ENCODE measurements at regions of chr10 and their contacts with region 1.

Region 1: DNA sequence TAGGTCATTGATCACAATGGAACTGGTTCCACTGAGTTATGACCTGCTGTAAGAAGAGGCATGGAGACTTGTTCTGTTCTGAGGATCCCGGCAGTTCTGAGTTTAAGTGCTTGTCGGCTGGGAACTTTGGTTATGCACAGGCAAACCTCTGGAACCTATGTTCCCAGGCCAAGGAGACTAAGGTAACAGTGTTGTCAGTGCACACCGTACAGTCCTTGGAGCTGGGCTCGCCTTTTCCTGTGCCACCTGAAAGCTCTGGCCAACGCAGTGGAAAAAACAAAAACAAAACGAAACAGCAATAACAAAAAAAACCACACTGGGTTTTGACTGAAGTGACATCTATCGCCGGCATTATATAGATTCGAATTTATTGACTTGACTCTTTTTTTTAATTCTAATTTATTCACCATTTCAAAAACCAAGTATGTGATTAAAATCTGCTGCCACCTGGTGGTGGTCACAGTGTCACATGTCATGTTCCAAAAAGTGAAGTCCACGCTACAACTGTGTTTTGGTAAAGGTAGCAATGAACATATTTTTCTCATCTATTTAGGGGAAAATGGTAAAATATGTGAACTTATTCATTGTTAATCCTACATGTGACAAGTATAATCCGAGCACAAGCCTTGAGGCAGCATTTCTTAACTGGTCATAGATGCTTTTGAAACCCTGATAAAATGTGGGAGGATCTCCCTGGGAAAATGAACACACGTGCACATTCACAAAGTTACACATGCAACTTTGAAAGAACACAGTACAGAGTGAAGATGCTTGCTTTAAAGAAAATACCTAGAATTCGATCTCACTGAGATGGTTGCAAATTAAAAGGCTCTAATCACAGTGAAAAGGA is 113.8 kb upstream of the PPP2R2D start:
- DNase-seq: peak; percentile 17
- ATAC-seq: no peak
- H3K4me3 ChIP-seq: no peak overlapping the region
- H3K27ac ChIP-seq: no peak overlapping the region
- H3K4me1 ChIP-seq: no peaks in the 10 kb centered on the region
- H3K27me3 ChIP-seq: no peaks in the 10 kb centered on the region
- CTCF ChIP-seq: peak; percentile 43
- POLR2A ChIP-seq: no peak
- RAD21 ChIP-seq: no peak; the same call in 1 of the 2 replicates

Region 2: DNA sequence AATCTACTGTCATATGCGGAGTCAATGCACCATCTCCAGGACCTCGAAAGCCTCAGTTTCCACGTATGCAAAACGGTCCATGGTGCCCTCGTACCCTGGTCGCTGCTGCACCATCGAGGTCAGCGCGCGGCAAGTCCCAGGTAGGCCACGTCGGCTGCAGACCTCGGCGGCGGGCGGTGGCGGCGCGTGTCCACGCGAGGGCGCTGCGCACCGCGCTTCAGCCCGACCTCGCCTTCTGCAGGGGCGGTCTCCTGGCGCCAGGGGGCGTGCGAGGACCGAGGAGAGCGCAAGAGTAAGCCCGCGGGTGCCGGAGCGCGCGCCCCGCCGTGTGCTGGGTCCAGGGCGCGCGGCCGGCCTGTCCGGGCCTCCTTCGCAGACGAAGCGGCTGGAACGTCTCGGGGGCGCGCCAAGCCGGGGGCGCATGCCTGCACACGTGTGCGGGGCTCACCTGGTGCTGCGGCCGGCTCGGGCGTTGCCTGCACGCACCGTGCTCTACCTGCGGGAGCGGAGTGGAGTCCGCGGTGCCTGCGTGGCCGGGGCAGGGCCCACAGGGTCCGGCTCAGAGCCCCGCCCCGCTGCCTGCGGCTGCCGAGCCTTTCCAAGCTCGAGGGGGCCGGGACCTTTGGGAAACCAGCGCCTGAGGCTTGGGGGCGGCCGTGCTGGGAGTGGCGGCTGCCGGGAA is 1596.8 kb before region 1 on chr10:
- CTCF ChIA-PET with region 1: no interaction called
- POLR2A ChIA-PET with region 1: no interaction called
- dilution Hi-C with region 1: no loop called
- in situ Hi-C with region 1: no loop called
- intact Hi-C with region 1: loop called (anchors 1 kb)
- DNase-seq: peak; percentile 75
- ATAC-seq: peak; percentile 96
- H3K4me3 ChIP-seq: peak overlapping the region; percentile 61
- H3K27ac ChIP-seq: no peak overlapping the region; the same call in 1 of the 2 replicates
- H3K4me1 ChIP-seq: 0 out of 2 replicates have a peak, but pooled peaks cover 1% of the 10 kb centered on the region
- H3K27me3 ChIP-seq: no peaks in the 10 kb centered on the region
- CTCF ChIP-seq: peak; percentile 100; the same call in 1 of the 2 replicates
- POLR2A ChIP-seq: no peak
- RAD21 ChIP-seq: peak; percentile 92

Region 3: GRCh38 chr10:130206216-130206737 is 1580.7 kb before region 1 on chr10:
- CTCF ChIA-PET with region 1: no interaction called
- POLR2A ChIA-PET with region 1: no interaction called
- dilution Hi-C with region 1: no loop called
- in situ Hi-C with region 1: no loop called
- intact Hi-C with region 1: loop called (anchors 5 kb)
- DNase-seq: no peak
- ATAC-seq: peak; percentile 25; the same call in 1 of the 2 replicates
- H3K4me3 ChIP-seq: no peak overlapping the region
- H3K27ac ChIP-seq: no peak overlapping the region
- H3K4me1 ChIP-seq: no peaks in the 10 kb centered on the region
- H3K27me3 ChIP-seq: no peaks in the 10 kb centered on the region; the same call in 1 of the 2 replicates
- CTCF ChIP-seq: no peak
- POLR2A ChIP-seq: no peak
- RAD21 ChIP-seq: no peak

Region 4: GRCh38 chr10:131641231-131641630 is 145.8 kb before region 1 on chr10:
- CTCF ChIA-PET with region 1: no interaction called
- POLR2A ChIA-PET with region 1: no interaction called
- dilution Hi-C with region 1: no loop called
- in situ Hi-C with region 1: no loop called
- intact Hi-C with region 1: no loop called
- DNase-seq: no peak
- ATAC-seq: no peak
- H3K4me3 ChIP-seq: no peak overlapping the region
- H3K27ac ChIP-seq: no peak overlapping the region
- H3K4me1 ChIP-seq: no peaks in the 10 kb centered on the region
- H3K27me3 ChIP-seq: no peaks in the 10 kb centered on the region
- CTCF ChIP-seq: no peak
- POLR2A ChIP-seq: no peak
- RAD21 ChIP-seq: no peak

Region 5: DNA sequence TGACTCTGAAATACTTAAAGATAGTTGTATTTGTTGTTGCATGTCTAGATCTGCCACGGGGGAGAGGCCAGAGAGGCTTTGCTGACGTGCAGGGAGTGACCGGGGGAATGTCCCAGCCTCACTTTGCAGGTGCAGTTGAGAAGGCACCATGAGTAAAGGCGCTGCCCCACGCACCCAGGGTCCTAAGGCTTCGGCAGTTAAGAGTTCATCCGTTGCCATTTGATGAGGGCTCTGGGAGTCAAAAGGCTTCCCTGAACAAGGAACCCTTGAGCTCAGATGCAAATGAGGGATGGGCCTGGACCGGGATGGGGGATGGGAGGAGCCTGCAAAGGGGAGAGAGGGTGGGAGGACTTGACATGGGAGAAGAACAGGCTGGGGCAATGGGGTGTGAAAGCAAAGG is 134.2 kb after region 1 on chr10:
- CTCF ChIA-PET with region 1: no interaction called
- POLR2A ChIA-PET with region 1: no interaction called
- dilution Hi-C with region 1: no loop called
- in situ Hi-C with region 1: no loop called
- intact Hi-C with region 1: no loop called
- DNase-seq: no peak
- ATAC-seq: no peak
- H3K4me3 ChIP-seq: no peak overlapping the region
- H3K27ac ChIP-seq: no peak overlapping the region
- H3K4me1 ChIP-seq: peaks cover 2% of the 10 kb centered on the region; the same call in 1 of the 2 replicates
- H3K27me3 ChIP-seq: no peaks in the 10 kb centered on the region
- CTCF ChIP-seq: no peak
- POLR2A ChIP-seq: no peak
- RAD21 ChIP-seq: no peak